Psoas muscle (tissue), 8 donors: ENCODE measurements at regions of chr3 and their contacts with region 1.

Region 1: DNA sequence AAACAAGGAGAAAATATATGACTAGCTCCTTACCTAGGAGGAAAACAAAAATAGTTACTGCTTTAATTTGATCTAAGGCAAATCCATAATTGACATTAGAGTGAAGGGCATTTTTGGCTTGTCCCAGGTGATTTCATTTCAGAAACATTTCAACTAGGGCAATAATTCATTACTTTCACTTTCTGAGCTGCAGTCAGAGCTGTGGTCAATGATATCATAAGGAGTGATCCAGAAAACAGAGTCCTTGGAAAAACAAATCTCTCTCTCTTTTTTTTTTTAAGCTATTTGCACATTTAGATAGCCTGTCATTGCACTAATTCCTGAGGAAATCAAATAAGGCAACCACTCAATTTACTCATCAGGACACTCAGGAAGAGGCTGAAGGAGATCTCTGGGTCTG is 269.5 kb upstream of the LRRC3B start:
- DNase-seq: no peak
- ATAC-seq: no peak
- H3K4me3 ChIP-seq: no peak overlapping the region
- H3K27ac ChIP-seq: no peak overlapping the region
- H3K4me1 ChIP-seq: no peaks in the 10 kb centered on the region
- H3K27me3 ChIP-seq: no peaks in the 10 kb centered on the region
- CTCF ChIP-seq: no peak

Region 2: DNA sequence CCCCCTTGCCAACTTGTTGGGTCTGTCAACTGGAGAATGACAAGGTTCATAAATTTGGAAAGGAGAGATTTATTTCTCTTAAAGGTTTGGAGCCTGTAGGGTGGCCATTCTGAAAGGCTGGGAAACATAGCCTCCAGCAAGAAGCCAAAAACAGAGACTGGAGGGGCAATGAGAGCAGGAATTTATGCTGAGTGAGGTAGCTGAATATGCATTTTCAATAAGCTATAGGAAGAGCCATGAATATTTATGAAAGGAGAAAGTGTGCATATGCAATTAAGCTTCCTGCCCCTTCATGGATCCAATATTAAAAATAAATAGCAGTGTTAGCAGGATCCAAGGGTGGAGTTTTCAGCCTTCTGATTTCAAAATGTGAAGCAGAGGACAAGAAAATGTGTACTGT is 36.6 kb before region 1 on chr3:
- intact Hi-C with region 1: loop called in 1 of 2 experiments (anchors 2 kb)
- DNase-seq: no peak
- ATAC-seq: no peak
- H3K4me3 ChIP-seq: no peak overlapping the region
- H3K27ac ChIP-seq: no peak overlapping the region
- H3K4me1 ChIP-seq: no peaks in the 10 kb centered on the region
- H3K27me3 ChIP-seq: no peaks in the 10 kb centered on the region
- CTCF ChIP-seq: no peak